Activated T-helper 2 cell treated with anti-CD3 and anti-CD28 coated beads, Interferon-gamma antibody, Interleukin-2, Interleukin-4, amounts not matched to agents 10 μg/mL and 5 μg/mL and 100 μg/mL, durations not matched to agents 14 hours and 24 hours and 36 hours (primary cell): ENCODE measurements at regions of chr1 and their contacts with region 1.

Region 1: DNA sequence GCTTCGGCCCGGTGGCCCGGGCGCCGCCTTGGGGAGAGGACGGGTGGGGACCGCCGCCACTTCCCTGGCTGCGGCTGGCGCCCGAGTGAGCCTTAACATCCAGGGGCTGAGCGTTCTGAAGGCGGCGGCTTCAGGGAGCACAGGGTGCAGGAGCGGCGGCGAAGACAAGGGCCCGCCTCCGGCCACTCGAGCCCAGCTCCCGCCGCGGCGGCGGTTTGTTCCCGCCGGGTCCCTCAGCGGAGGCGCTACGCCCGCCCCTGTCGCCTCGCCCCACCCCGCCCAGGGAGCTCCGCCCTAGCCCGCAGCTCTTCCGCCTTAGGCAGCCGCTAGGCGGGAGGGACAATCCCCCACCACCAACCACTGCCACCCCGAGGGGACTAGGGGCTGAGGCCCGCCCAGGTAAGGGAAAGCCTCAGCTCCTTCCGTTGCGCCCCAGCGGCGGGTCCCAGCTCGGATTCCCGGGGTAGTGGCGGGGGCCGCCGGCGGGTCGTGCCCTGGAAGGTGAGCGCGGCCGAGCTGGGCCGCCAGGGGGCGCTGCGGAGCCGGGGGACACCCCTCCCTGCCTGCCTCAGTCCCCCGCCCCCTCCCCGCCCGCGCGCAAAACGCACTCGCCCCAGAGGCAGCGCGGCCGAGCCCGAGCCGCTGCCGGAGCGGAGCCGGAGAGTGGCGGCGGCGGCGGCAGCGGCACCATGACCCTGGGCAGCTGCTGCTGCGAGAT is at the start of gene FOXD2:
- DNase-seq: peak; percentile 85
- H3K4me3 Mint-ChIP-seq: peak within 1 kb of the TSS; percentile 90
- H3K27ac Mint-ChIP-seq: peak within 1 kb of the TSS; percentile 84
- H3K4me1 Mint-ChIP-seq: peaks cover 25% of the 10 kb centered on the region
- H3K27me3 Mint-ChIP-seq: peaks cover 28% of the 10 kb centered on the region
- total RNA-seq, gene FOXD2: 0.11 and 0.18 TPM in 2 replicates

Region 2: DNA sequence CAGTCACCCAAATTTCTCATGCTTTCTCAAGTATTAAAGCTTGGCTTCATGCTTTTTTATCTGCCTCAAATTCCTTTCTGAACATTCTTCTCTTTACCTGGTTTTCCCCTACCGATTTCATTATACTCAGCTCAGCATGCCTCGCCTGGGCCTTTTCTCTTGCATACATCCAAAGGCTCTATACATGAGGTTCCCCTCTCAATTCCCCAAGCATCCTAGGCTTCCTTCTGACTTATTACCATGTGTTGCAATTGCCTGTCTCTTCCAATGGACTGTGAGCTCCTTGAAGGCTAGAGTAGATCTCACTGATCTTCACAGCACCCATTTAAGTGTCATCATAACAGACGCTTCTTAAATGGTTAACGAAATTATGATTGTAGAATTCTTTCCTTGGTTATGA is 324.4 kb before region 1 on chr1:
- intact Hi-C with region 1: no loop called
- DNase-seq: no peak
- H3K4me3 Mint-ChIP-seq: no peak overlapping the region
- H3K27ac Mint-ChIP-seq: no peak overlapping the region
- H3K4me1 Mint-ChIP-seq: no peaks in the 10 kb centered on the region
- H3K27me3 Mint-ChIP-seq: peaks cover 2% of the 10 kb centered on the region

Region 3: DNA sequence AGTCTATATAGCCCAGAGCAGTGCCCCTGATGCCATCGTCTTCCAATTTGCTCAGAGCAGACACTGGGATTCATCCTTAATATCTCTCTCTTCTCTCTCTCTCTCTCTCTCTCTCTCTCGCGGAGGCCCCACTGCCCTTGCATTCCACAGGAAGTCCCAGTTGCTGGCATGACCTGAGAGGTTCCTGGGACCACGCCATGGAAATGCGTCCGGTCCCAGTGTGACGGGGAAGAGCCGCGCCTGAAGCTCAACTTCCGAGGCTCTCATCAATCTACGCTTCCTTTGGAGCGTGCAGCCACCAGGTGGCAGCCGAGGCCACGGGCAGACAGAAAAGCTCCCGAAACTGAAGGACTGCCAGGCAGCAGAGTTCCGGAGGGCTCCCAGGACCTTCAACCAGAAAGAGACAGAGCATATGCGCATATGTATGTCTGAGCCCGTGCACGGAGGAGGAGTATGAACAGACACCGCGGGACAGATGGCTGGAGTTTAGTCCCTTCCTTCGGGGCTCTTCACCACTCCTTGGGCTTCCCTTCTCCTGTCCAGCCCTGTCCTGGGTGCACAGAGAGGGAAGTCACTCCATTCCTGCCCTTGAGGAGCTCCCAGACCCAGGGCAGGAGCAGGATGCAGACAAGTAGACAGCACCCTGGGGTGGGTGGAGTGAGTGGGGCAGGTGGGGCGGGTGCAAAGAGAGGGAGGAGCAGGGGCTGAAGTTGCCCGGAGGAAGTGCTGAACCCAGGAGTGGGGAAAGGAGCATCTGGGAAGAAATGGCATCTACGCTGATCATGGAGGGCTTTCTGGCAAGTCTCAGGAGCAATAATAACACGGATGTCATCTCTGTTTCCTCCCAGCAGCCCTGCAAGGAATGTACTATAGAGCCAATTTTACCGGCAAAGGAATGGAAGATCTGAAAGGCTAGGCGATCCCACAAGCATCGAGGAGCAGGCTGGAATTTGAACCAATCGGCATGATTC is 258.3 kb before region 1 on chr1:
- intact Hi-C with region 1: loop called (anchors 10 kb)
- DNase-seq: peak; percentile 78
- H3K4me3 Mint-ChIP-seq: peak overlapping the region; percentile 88
- H3K27ac Mint-ChIP-seq: peak overlapping the region; percentile 86
- H3K4me1 Mint-ChIP-seq: peaks cover 11% of the 10 kb centered on the region
- H3K27me3 Mint-ChIP-seq: peaks cover 12% of the 10 kb centered on the region

Region 4: GRCh38 chr1:47313915-47314664 is 123.5 kb before region 1 on chr1 and contains the start of gene STIL:
- intact Hi-C with region 1: loop called (anchors 1 kb)
- DNase-seq: peak; percentile 99
- H3K4me3 Mint-ChIP-seq: peak within 1 kb of the TSS; percentile 86
- H3K27ac Mint-ChIP-seq: peak within 1 kb of the TSS; percentile 82
- H3K4me1 Mint-ChIP-seq: peaks cover 17% of the 10 kb centered on the region
- H3K27me3 Mint-ChIP-seq: no peaks in the 10 kb centered on the region
- total RNA-seq, gene STIL: 24.8 and 27.6 TPM in 2 replicates

Region 5: GRCh38 chr1:47416319-47417169 is 21.1 kb before region 1 on chr1:
- intact Hi-C with region 1: loop called (anchors 2 kb)
- DNase-seq: no peak
- H3K4me3 Mint-ChIP-seq: peak overlapping the region; percentile 43
- H3K27ac Mint-ChIP-seq: no peak overlapping the region
- H3K4me1 Mint-ChIP-seq: peaks cover 4% of the 10 kb centered on the region
- H3K27me3 Mint-ChIP-seq: peaks cover 68% of the 10 kb centered on the region

Region 6: GRCh38 chr1:47710329-47711071 is 272.9 kb after region 1 on chr1:
- intact Hi-C with region 1: loop called (anchors 2 kb)
- DNase-seq: peak; percentile 57
- H3K4me3 Mint-ChIP-seq: no peak overlapping the region
- H3K27ac Mint-ChIP-seq: no peak overlapping the region
- H3K4me1 Mint-ChIP-seq: peaks cover 5% of the 10 kb centered on the region
- H3K27me3 Mint-ChIP-seq: peaks cover 72% of the 10 kb centered on the region